Activated CD4-positive, alpha-beta T cell treated with anti-CD3 and anti-CD28 coated beads for 36 hours (primary cell): ENCODE measurements at regions of chr9 and their contacts with region 1.

Region 1: DNA sequence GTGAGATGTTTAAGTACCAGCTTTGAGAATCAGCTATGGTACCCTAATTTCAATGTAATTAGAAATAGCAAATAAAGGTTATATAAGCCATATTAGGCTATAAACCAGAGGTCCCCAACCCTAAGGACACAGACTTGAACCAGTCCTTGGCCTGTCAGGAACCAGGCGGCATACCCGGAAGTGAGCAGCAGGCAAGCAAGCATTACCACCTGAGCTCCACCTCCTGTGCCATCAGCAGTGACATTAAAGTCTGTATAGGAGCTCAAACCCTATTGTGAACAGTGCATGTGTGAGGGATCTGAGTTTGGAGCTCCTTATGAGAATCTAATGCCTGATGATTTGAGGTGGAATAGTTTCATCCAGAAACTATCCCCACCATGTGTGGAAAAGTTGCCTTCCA is 1009.5 kb downstream of the PTPRD start:
- DNase-seq: no peak
- ATAC-seq: no peak
- H3K4me3 Mint-ChIP-seq: no peak overlapping the region
- H3K27ac Mint-ChIP-seq: no peak overlapping the region
- H3K4me1 Mint-ChIP-seq: no peaks in the 10 kb centered on the region
- H3K27me3 Mint-ChIP-seq: no peaks in the 10 kb centered on the region

Region 2: DNA sequence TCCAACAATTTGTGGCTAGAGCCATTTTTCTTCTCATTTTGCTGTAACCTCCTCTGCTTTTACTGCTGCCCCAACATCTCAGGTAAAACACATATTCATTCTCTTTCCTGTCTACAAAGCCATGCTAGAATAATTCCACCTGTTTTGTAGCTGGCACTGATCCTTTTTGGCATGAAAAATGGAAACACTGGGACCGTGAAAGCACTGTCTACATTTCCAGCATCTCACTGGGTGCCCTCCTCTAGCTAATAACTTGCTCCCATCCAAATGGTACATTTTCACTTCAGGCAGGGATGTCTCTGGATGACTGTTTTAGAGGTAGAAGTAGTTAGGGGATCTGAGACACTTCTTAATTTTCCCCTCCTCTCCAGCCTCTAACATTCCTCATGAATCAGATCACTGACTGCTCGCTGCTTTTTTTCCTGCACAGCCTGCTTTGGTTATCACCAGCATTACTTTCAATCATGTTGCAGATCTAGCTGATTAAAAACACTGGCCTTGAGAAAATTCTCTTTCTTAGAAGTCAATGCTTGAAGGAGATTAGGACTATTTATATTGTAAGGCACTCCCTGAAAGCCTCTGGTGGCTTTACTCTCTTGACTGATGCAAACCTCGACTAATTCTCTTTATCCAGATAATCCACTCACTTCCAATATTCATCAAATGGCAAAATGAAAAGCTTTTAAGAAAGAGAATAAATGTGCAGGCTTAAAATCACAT is 491.2 kb before region 1 on chr9:
- CTCF ChIA-PET with region 1: no interaction called
- POLR2A ChIA-PET with region 1: no interaction called
- intact Hi-C with region 1: no loop called
- DNase-seq: no peak
- ATAC-seq: no peak
- H3K4me3 Mint-ChIP-seq: no peak overlapping the region
- H3K27ac Mint-ChIP-seq: no peak overlapping the region
- H3K4me1 Mint-ChIP-seq: no peaks in the 10 kb centered on the region
- H3K27me3 Mint-ChIP-seq: no peaks in the 10 kb centered on the region

Region 3: DNA sequence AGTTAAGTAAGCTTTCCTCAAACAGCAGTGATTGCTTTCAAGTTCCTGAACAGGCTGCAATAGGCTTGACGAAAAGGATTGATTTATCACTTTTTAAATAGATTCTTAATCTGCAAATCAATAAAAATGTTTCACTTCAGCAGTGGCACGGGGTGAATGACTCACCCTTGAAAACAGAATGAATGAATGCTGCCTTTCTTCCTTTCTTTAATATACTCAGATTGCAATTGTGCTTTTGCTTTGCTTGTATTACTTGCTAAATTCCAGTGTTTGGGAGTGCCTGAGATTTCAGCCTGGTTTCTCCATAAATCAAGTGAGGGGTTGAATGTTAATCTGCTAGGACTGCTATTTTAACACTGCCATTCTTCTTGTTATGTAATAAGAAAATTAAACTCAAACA is 284.3 kb before region 1 on chr9:
- CTCF ChIA-PET with region 1: no interaction called
- POLR2A ChIA-PET with region 1: no interaction called
- intact Hi-C with region 1: no loop called
- DNase-seq: no peak
- ATAC-seq: no peak
- H3K4me3 Mint-ChIP-seq: no peak overlapping the region
- H3K27ac Mint-ChIP-seq: no peak overlapping the region
- H3K4me1 Mint-ChIP-seq: no peaks in the 10 kb centered on the region
- H3K27me3 Mint-ChIP-seq: no peaks in the 10 kb centered on the region

Region 4: GRCh38 chr9:9790216-9790872 is 187.0 kb after region 1 on chr9:
- CTCF ChIA-PET with region 1: interaction called, 5 read pairs
- POLR2A ChIA-PET with region 1: no interaction called
- intact Hi-C with region 1: loop called (anchors 1 kb)
- DNase-seq: peak; percentile 31
- ATAC-seq: no peak
- H3K4me3 Mint-ChIP-seq: no peak overlapping the region
- H3K27ac Mint-ChIP-seq: no peak overlapping the region
- H3K4me1 Mint-ChIP-seq: no peaks in the 10 kb centered on the region
- H3K27me3 Mint-ChIP-seq: no peaks in the 10 kb centered on the region